ENCODE measurements at regions of chr19 and their contacts with region 1.

Region 1: DNA sequence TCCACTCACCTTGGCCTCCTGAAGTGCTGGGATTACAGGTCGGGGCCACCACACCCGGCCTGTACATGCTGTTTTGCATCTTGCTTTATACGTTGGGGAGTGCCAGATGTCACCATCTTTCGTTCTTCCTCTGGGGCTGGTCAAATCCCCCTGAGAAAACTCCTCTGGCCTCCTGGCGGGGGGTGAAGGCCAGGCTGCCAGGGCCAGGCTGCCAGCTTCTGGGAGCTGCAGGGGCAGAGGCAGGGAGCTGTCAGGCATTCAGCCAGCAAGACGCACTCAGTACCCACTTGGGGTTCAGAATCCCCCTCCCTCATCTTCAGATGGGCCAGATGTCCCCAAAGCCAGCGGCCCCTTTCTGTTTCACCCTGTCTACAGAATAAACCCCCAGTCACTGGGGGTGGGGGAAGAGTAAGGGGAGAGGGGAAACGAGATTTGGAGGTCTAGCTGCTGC is 16.1 kb downstream of the ZSWIM9 start:
- DNase-seq: no peak
- CTCF ChIP-seq: no peak

Region 2: DNA sequence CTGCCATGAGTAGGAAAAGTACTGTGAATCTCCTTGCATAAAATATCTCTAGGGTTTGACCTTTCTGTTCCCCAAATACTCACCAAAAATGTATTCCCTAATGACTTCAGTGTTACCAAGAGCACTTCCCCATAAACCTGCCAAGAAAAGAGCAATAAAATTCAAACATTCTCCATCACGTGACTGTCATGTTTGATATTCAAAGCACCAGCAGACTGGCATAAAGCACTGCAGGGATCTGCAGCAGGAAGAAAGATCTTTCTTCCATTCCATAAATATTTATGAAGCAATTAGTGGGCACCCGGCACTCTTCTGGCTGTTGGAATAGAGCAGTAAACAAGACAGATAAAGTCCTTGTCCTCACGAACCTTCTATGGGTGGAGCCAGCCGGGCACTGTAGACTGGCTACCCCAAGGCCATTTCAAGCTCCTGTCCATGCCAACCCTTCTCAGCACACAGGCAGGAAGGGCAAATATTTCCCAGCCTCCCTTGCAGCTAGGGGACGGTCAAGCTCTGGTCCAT is 96.2 kb before region 1 on chr19:
- CTCF ChIA-PET with region 1: no interaction called
- POLR2A ChIA-PET with region 1: no interaction called
- DNase-seq: no peak
- CTCF ChIP-seq: no peak

Region 3: GRCh38 chr19:48203732-48204628 is 17.4 kb after region 1 on chr19:
- CTCF ChIA-PET with region 1: interaction called, 11 read pairs
- POLR2A ChIA-PET with region 1: no interaction called
- DNase-seq: peak; percentile 96
- CTCF ChIP-seq: no peak

Region 4: DNA sequence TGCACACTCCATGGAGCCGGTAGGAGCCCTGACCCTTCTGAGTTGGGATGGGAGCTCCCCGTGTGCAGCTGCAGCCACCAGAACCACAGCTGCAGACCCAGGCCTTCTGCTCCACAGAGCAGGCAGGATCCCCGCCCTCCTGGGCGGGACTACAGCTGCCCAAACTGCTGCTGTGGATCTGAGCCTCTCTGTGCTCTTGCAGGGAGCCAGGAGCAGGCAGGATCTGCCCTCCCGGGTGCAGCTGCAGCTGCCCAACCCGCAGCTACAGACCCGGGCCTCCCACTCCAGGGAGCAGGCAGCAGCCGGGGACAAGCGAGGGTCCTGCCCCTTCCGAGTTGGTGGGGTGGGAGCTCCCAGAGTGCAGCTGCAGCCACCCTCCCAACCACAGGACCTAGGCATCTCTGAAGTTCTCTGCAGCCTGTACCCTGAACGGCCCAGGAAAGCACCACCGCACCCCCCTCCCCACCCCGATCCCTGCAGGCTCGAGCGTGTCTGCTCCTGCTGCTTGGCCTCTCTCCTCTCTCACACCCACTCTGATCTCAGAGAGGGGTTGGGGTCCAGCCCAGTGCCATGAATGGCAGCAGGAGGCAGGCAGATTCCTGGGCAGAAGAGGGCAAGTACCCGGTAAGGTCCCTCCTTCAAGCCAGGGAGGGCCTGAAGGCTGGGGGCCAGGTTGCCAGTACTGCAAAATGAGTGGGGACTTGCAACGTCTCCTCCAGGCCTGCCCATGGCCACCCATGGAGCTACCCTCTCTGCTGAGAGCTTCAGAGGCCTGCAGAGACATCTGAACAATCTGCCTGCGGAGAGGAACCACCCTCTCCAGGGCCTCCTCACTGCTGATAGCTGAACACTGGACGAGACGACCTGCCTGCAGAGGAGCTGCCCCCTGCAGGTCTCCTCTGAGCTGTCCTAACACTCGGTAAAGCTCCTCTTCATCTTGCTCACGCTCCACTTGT is 122.3 kb after region 1 on chr19:
- CTCF ChIA-PET with region 1: no interaction called
- POLR2A ChIA-PET with region 1: no interaction called
- DNase-seq: no peak
- CTCF ChIP-seq: peak; percentile 10

Region 5: DNA sequence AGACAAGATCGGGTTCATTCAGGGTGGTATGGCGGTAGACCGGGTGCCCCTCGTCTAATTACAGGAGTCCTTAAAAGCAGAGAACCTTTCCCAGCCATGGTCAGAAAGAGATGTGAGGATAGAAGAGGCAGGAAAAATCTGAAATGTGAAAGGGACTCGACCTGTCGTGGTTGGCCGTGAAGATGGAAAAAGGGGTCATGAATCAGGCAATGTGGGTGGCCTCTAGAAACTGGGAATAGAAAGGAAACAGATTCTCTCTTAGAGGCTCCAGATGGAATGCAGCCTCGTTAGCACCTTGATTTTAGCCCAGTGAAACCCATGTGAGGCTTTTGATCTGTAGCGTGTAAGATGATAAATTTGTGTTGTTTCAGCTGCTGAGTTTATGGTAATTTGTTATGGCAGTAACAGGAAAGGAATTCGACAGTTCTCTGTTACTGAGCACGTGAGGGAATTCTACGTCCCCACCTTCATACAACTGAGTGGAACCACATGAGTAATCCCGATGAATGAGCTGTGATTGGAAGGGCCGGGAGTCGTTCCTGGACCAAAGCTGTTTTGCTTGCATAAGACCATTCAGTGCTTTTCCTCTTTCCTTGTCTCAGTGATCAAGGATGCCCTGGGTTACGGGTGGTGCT is 470.4 kb after region 1 on chr19:
- CTCF ChIA-PET with region 1: no interaction called
- POLR2A ChIA-PET with region 1: no interaction called
- DNase-seq: no peak
- CTCF ChIP-seq: no peak

Measured in GM10248 (cell line).